Psoas muscle (tissue), 8 donors: ENCODE measurements at regions of chr4 and their contacts with region 1.

Region 1: GRCh38 chr4:118865091-118865708 is 23.5 kb upstream of the SYNPO2 start:
- DNase-seq: no peak
- ATAC-seq: peak; percentile 89 to 99 (median 96)
- H3K4me3 ChIP-seq: no peak overlapping the region
- H3K27ac ChIP-seq: no peak overlapping the region
- H3K4me1 ChIP-seq: peaks cover 2% of the 10 kb centered on the region
- H3K27me3 ChIP-seq: no peaks in the 10 kb centered on the region
- CTCF ChIP-seq: peak; percentile 67

Region 2: GRCh38 chr4:118772081-118772766 is 93.0 kb before region 1 on chr4:
- intact Hi-C with region 1: loop called in 1 of 2 experiments (anchors 10 kb)
- DNase-seq: no peak
- ATAC-seq: peak; percentile 79 to 92 (median 84)
- H3K4me3 ChIP-seq: peak overlapping the region; percentile 23
- H3K27ac ChIP-seq: peak overlapping the region; percentile 17
- H3K4me1 ChIP-seq: peaks cover 16% of the 10 kb centered on the region
- H3K27me3 ChIP-seq: no peaks in the 10 kb centered on the region
- CTCF ChIP-seq: peak; percentile 70

Region 3: DNA sequence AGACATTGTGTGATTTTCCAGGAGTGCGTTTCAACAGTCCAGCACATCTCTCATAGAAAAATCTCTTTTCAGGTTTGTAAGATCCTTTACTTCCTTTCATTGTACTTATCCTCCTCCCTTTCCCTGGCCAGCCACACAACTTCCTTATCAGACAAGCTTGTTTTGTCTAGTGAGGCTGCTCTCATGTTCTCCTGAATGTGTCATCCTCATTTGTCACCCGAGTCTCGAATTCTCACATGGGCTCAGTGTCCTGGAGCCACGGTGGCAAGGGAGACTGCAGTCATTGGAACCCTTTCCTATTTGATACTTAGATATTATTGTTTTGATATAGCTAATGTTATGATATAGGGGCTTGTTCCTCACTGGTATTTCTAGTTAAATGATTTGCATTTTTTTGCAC is 40.4 kb after region 1 on chr4:
- intact Hi-C with region 1: loop called in 1 of 2 experiments (anchors 1 kb)
- DNase-seq: peak in 1 of 2 donors; percentile 53
- ATAC-seq: peak; percentile 74 to 90 (median 86)
- H3K4me3 ChIP-seq: no peak overlapping the region
- H3K27ac ChIP-seq: peak overlapping the region; percentile 72
- H3K4me1 ChIP-seq: peaks cover 32% of the 10 kb centered on the region
- H3K27me3 ChIP-seq: no peaks in the 10 kb centered on the region
- CTCF ChIP-seq: no peak